MCF 10A (cell line): ENCODE measurements at regions of chr21 and their contacts with region 1.

Region 1: DNA sequence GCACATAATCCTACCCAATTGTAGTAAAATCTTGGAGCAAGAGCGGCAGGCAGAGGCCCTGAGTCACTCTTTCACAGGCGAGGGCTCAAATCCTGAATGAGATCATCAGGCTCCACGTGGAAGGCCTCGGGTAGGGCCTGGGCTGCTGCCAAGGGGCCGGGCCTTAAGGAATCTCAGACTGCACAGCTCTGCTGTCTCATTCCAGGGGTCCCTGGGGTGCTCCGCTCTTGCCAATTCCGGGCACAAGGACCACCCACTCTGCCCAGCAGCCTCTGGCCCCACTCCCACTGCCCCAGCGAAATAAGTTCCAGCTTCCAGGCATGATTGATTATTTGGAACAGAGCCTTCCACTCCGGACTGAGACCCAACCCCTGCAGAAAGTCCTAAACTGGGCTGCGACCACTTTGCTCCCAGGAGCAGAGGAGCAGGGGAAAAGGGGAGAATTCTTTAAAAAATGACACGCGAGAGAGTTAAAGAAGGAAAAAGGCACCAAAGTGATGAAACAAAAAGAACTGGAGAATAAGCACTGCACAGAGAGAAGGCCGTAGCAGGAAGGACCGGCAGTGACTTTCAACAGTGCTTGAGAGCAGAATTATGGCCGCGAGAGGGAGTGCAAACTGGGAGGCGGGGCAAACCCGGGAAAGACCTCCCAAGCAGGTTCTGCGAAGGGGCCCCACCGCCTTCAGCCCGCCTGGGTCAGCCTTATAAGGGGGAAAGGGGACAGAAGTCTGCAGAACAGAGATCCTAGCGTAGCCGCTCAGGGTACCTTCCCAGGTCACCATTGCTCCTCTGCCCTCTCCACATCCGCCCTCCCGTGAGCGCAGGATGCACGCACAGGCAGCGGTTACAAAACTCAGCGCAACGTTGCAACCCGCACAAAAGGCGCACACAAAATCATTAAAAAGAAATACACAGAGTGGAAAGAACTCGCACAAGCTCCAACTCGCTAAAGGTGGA is 2.0 kb downstream of the ADAMTS1 start:
- DNase-seq: peak; percentile 95
- H3K4me3 Mint-ChIP-seq: peak overlapping the region; percentile 76
- H3K27ac Mint-ChIP-seq: peak overlapping the region; percentile 38
- H3K4me1 Mint-ChIP-seq: peaks cover 38% of the 10 kb centered on the region
- H3K27me3 Mint-ChIP-seq: peaks cover 29% of the 10 kb centered on the region
- CTCF ChIP-seq: peak; percentile 17

Region 2: GRCh38 chr21:26769613-26770188 is 73.6 kb before region 1 on chr21:
- CTCF ChIA-PET with region 1: interaction called, 18 read pairs
- POLR2A ChIA-PET with region 1: interaction called, 4 read pairs
- intact Hi-C with region 1: loop called (anchors 1 kb)
- DNase-seq: peak; percentile 48
- H3K4me3 Mint-ChIP-seq: no peak overlapping the region
- H3K27ac Mint-ChIP-seq: no peak overlapping the region
- H3K4me1 Mint-ChIP-seq: no peaks in the 10 kb centered on the region
- H3K27me3 Mint-ChIP-seq: no peaks in the 10 kb centered on the region
- CTCF ChIP-seq: peak; percentile 46

Region 3: GRCh38 chr21:26814374-26814773 is 28.9 kb before region 1 on chr21:
- CTCF ChIA-PET with region 1: interaction called, 12 read pairs
- POLR2A ChIA-PET with region 1: no interaction called
- intact Hi-C with region 1: loop called (anchors 1 kb)
- DNase-seq: no peak
- H3K4me3 Mint-ChIP-seq: no peak overlapping the region
- H3K27ac Mint-ChIP-seq: no peak overlapping the region
- H3K4me1 Mint-ChIP-seq: peaks cover 7% of the 10 kb centered on the region
- H3K27me3 Mint-ChIP-seq: no peaks in the 10 kb centered on the region
- CTCF ChIP-seq: no peak

Region 4: DNA sequence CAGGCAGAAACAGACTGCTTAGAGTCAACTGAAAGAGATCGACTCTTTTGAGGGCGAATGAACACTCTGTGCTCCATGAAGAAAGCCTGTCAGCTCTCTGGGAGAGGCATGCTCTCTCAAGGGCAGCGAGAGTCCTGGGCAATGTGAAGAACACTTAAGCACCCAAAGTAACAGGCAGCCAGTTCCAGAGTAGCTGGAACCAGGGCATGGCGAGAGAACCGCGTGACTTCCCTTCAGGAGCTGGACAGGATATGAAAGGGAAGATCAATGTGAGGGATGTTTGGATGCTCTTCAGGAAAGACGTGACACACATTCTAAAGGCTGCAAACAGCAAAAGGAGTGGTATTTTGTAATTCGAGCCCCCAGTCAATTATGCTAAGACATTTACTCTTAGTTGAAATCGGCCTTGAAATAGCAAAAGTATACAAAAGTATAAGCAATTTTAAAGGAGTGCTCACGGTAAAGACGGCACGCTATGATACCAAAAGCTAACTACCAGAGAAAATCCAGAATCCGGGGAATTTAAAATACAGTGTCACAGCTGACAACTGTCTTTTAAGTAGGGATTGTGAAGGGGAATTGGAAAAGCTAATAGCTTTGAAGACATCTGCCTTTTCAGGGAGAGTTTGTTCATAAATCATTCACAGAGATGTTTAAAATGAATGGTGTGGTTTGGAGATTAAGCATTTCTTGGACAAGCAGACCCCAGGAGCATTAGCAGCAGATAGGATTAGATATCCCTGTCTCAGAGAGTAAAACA is 102.8 kb after region 1 on chr21:
- CTCF ChIA-PET with region 1: no interaction called
- POLR2A ChIA-PET with region 1: no interaction called
- intact Hi-C with region 1: no loop called
- DNase-seq: no peak
- H3K4me3 Mint-ChIP-seq: no peak overlapping the region
- H3K27ac Mint-ChIP-seq: no peak overlapping the region
- H3K4me1 Mint-ChIP-seq: peaks cover 6% of the 10 kb centered on the region
- H3K27me3 Mint-ChIP-seq: no peaks in the 10 kb centered on the region
- CTCF ChIP-seq: no peak

Region 5: DNA sequence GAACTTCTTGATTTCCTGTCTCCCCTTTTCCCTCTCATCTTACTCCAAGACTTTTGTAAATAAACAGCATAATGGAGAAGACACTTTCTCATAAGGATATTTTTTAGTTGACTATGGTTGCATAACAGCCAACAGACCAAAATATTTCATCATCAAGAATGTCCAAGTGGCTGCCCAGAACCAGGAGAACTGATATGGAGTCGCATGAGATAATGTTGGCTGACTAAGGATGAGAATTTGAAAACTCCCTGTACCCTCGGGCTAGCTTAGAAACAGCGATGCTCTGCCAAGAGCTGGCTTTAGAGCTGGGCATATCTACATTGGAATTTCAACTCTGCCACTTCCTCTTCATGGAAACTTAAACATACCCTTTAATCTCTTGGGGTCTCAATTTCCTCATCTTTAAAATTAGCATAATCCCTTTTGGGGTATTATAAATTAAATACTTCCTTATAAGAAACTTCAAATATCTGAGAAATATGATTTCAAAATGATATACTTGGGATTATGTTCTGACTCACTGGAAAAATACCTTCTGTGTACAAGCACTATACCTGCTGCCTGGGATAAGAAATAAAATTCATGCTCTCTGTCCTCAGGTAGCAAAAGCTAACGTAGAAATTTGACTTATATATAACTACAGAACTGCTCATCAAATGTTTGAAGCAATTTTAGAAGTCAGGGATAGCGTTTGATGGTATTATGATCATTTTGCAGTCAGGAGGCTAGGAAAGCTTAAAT is 1372.1 kb after region 1 on chr21:
- CTCF ChIA-PET with region 1: no interaction called
- POLR2A ChIA-PET with region 1: no interaction called
- intact Hi-C with region 1: loop called (anchors 5 kb)
- DNase-seq: peak; percentile 87
- H3K4me3 Mint-ChIP-seq: no peak overlapping the region
- H3K27ac Mint-ChIP-seq: peak overlapping the region; percentile 77
- H3K4me1 Mint-ChIP-seq: peaks cover 8% of the 10 kb centered on the region
- H3K27me3 Mint-ChIP-seq: no peaks in the 10 kb centered on the region
- CTCF ChIP-seq: no peak

Region 6: GRCh38 chr21:28633839-28634555 is 1790.7 kb after region 1 on chr21:
- CTCF ChIA-PET with region 1: no interaction called
- POLR2A ChIA-PET with region 1: no interaction called
- intact Hi-C with region 1: loop called (anchors 10 kb)
- DNase-seq: peak; percentile 68
- H3K4me3 Mint-ChIP-seq: no peak overlapping the region
- H3K27ac Mint-ChIP-seq: peak overlapping the region; percentile 84
- H3K4me1 Mint-ChIP-seq: peaks cover 44% of the 10 kb centered on the region
- H3K27me3 Mint-ChIP-seq: no peaks in the 10 kb centered on the region
- CTCF ChIP-seq: no peak